ENCODE measurements at regions of chr17 and their contacts with region 1.

Region 1: DNA sequence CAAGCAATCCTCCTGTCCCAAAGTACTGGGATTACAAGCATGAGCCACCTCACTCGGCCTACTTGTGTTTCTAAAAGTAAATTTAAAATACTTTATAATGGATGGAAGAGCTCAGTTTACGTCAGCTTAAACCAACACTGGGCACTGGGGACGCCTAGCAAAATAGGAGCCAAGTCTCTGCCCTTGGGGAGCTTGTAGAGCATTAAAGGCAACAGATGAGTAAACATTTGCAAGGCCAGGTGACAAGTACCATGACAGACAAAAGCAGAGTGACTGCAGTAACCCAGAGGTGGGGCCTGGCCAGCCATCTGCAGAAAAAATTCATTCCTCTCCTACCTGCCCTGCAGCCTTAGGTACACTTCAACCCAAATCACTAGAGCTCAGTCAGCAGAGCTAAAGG is 12.1 kb upstream of the NLK start:
- DNase-seq: no peak
- H3K4me3 Mint-ChIP-seq: no peak overlapping the region
- H3K27ac Mint-ChIP-seq: no peak overlapping the region
- H3K4me1 Mint-ChIP-seq: peaks cover 16% of the 10 kb centered on the region
- H3K27me3 Mint-ChIP-seq: no peaks in the 10 kb centered on the region
- CTCF ChIP-seq: no peak

Region 2: GRCh38 chr17:27985306-27985705 is 45.1 kb before region 1 on chr17:
- CTCF ChIA-PET with region 1: no interaction called
- POLR2A ChIA-PET with region 1: no interaction called
- intact Hi-C with region 1: no loop called
- DNase-seq: no peak
- H3K4me3 Mint-ChIP-seq: no peak overlapping the region
- H3K27ac Mint-ChIP-seq: no peak overlapping the region
- H3K4me1 Mint-ChIP-seq: peaks cover 17% of the 10 kb centered on the region
- H3K27me3 Mint-ChIP-seq: no peaks in the 10 kb centered on the region
- CTCF ChIP-seq: no peak

Region 3: GRCh38 chr17:28041068-28041843 is 10.9 kb after region 1 on chr17:
- CTCF ChIA-PET with region 1: no interaction called
- POLR2A ChIA-PET with region 1: interaction called, 10 read pairs
- intact Hi-C with region 1: no loop called
- DNase-seq: peak; percentile 99
- H3K4me3 Mint-ChIP-seq: peak overlapping the region; percentile 91
- H3K27ac Mint-ChIP-seq: peak overlapping the region; percentile 81
- H3K4me1 Mint-ChIP-seq: peaks cover 47% of the 10 kb centered on the region
- H3K27me3 Mint-ChIP-seq: no peaks in the 10 kb centered on the region
- CTCF ChIP-seq: no peak